ENCODE measurements at regions of chr15 and their contacts with region 1.

Region 1: DNA sequence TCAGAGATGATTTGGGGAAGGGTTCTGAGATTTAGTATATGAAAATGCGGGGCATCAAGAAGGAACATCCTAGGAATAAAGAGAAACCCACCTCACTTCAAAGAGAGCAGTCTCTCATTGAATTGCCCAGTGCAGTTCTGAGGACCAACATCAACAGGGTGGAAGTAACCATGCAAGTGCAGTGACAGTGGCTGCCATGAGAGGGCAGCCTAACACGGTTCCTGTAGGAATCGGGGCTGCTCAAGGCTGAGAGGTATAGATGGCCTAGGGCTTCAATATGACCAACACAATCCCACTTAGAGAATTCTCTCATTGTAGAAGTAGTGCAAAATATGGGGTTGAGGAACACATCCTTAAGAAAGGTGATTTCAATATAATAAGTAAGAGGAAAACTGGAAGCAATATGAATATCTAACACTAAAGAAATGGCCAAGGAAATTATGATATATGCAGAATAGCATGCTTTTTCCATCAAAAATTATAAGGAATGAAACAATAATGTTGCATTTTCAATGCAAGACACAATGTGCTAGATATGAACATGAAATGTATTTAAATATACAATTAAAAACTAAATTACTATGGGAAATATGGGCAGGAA is 51.1 kb upstream of the ARRDC4 start:
- DNase-seq: peak; percentile 9 to 66 (median 47)
- ATAC-seq: peak; percentile 86
- H3K4me3 ChIP-seq: no peak overlapping the region
- H3K4me3 Mint-ChIP-seq: no peak overlapping the region
- H3K27ac ChIP-seq: no peak overlapping the region
- H3K27ac Mint-ChIP-seq: no peak overlapping the region
- H3K4me1 ChIP-seq: no peaks in the 10 kb centered on the region
- H3K4me1 Mint-ChIP-seq: peaks cover 0 to 2% (median 1%) of the 10 kb centered on the region in 7 donors
- H3K27me3 ChIP-seq: peaks cover 0 to 3% of the 10 kb centered on the region in 2 donors
- H3K27me3 Mint-ChIP-seq: peaks cover 10 to 35% (median 21%) of the 10 kb centered on the region in 5 donors

Region 2: DNA sequence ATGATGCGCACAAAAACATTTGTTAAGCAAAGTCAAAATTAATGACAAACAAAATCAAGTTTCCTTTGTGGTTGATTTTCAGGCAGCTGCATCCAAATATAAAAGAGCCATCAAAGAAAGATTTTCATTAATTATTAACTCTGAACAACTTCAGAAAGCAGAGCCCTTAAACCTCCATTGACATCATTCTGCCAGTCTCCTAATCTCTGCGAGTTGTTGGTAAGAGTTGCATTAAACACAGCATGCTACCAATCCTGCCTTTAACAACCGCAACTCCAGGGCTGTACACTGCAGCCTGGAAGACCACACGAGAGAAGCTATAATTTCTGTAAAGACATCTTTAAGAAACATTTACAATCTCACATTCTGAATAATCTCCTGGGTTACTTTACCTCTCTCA is 1374.2 kb before region 1 on chr15:
- CTCF ChIA-PET with region 1: no interaction called
- POLR2A ChIA-PET with region 1: no interaction called
- intact Hi-C with region 1: no loop called
- DNase-seq: no peak
- ATAC-seq: no peak
- H3K4me3 ChIP-seq: no peak overlapping the region
- H3K4me3 Mint-ChIP-seq: no peak overlapping the region
- H3K27ac ChIP-seq: no peak overlapping the region
- H3K27ac Mint-ChIP-seq: no peak overlapping the region
- H3K4me1 ChIP-seq: no peaks in the 10 kb centered on the region
- H3K4me1 Mint-ChIP-seq: peaks cover 0 to 2% (median 0%) of the 10 kb centered on the region in 7 donors
- H3K27me3 ChIP-seq: no peaks in the 10 kb centered on the region
- H3K27me3 Mint-ChIP-seq: peaks cover 0 to 17% (median 10%) of the 10 kb centered on the region in 5 donors

Region 3: DNA sequence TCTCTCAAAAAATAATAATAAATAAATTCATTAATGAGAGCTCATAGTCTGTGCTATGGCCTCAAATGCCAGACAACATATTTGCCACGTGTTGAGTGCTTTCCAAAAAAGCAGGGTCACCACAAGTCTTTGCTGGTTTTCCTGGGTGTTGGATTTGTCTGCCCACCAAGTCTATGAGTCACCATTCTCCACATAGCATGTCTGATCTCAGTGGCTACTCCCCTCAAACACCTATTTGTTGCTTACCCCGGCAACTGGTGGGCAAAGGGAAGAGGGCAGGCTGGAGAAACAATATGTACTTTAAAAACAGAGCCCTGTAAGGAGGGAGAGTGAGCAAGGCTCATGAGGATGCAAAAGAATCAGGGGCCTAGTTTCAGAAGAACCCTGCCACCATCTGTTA is 68.9 kb before region 1 on chr15:
- CTCF ChIA-PET with region 1: no interaction called
- POLR2A ChIA-PET with region 1: no interaction called
- intact Hi-C with region 1: no loop called
- DNase-seq: no peak
- ATAC-seq: no peak
- H3K4me3 ChIP-seq: no peak overlapping the region
- H3K4me3 Mint-ChIP-seq: no peak overlapping the region
- H3K27ac ChIP-seq: no peak overlapping the region
- H3K27ac Mint-ChIP-seq: no peak overlapping the region
- H3K4me1 ChIP-seq: no peaks in the 10 kb centered on the region
- H3K4me1 Mint-ChIP-seq: no peaks in the 10 kb centered on the region
- H3K27me3 ChIP-seq: no peaks in the 10 kb centered on the region
- H3K27me3 Mint-ChIP-seq: peaks cover 0 to 8% (median 0%) of the 10 kb centered on the region in 5 donors

Region 4: DNA sequence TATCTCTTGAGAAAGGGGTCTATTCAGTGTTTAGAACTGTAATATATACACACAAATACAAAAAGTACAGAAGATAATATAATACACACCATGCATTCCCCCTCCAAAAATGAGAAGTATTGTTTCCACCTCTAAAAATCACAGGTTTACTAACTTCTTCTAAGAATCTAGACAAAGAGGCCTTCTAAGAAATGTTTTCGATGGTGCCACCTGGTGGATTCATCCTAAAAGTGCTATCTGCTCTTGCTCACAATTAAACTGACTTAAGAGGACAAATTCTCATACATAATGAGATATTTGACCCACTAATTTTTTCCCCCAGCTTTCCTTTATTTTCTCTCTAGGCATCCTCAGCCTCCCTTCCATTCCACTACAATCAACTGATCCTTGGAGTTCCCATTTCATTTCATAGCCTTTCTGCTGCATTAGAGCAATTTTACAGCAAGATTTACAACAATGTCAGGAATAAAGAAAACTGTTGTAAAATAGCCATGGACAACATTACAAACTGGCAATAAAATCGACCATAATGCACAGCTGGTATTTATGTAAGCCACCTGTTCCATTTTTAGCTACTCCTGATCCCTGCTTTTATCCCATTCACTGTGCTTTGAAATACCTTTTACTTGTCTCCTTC is 175.7 kb after region 1 on chr15:
- CTCF ChIA-PET with region 1: interaction called, 5 read pairs
- POLR2A ChIA-PET with region 1: no interaction called
- intact Hi-C with region 1: loop called (anchors 1 kb)
- DNase-seq: peak in 7 of 9 donors; percentile 3 to 51 (median 36)
- ATAC-seq: no peak
- H3K4me3 ChIP-seq: no peak overlapping the region
- H3K4me3 Mint-ChIP-seq: no peak overlapping the region
- H3K27ac ChIP-seq: no peak overlapping the region
- H3K27ac Mint-ChIP-seq: no peak overlapping the region
- H3K4me1 ChIP-seq: no peaks in the 10 kb centered on the region
- H3K4me1 Mint-ChIP-seq: no peaks in the 10 kb centered on the region
- H3K27me3 ChIP-seq: no peaks in the 10 kb centered on the region
- H3K27me3 Mint-ChIP-seq: no peaks in the 10 kb centered on the region

Region 5: GRCh38 chr15:98428253-98428989 is 519.0 kb after region 1 on chr15:
- CTCF ChIA-PET with region 1: no interaction called
- POLR2A ChIA-PET with region 1: no interaction called
- intact Hi-C with region 1: loop called in 1 of 2 experiments (anchors 2 kb)
- DNase-seq: peak in 8 of 9 donors; percentile 10 to 77 (median 50)
- ATAC-seq: peak; percentile 80
- H3K4me3 ChIP-seq: no peak overlapping the region
- H3K4me3 Mint-ChIP-seq: peak overlapping the region; percentile 45 to 72 (median 60)
- H3K27ac ChIP-seq: no peak overlapping the region
- H3K27ac Mint-ChIP-seq: no peak overlapping the region
- H3K4me1 ChIP-seq: no peaks in the 10 kb centered on the region
- H3K4me1 Mint-ChIP-seq: peaks cover 0 to 16% (median 4%) of the 10 kb centered on the region in 7 donors
- H3K27me3 ChIP-seq: peaks cover 0 to 15% of the 10 kb centered on the region in 2 donors
- H3K27me3 Mint-ChIP-seq: peaks cover 38 to 77% (median 64%) of the 10 kb centered on the region in 5 donors